ENCODE measurements at regions of chr1 and their contacts with region 1.

Region 1: DNA sequence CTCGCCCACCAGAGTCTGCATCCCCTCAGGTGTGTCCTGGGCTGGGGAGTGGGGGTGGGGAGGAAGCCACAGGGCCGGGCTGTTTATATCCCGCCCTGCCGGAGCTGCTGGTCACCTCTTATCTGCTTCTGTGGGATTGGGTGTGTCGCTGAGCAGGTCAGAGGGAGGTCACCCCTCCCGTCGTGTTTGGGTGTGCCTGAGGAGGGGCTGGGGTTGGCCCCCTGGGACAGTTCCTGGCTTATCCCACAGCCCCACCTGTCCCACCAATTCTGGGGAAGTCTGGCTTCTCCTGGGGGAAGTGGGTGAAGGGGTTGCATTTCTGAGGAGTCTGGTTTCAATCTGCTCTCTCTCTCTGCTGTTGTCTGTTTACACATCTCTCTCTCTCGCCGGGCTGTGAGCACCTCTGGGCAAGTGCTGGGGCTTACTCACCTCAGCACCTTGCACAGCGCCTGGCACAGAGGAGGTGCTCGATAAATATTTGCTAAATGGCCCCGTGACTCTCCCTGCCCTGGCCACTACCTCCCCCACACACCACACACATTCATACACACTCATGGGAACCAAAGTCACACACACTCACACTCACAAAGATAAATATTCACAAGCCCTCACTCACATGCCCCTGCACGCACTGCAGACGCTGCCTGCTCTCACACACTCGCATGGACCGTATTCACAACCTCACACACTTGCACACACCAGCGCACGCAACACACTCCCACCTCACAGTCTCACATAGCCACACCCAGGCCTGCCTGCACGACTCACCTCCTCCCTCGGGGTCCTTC is 8.3 kb downstream of the ELF3 start:
- DNase-seq: peak; percentile 95
- H3K4me3 Mint-ChIP-seq: peak overlapping the region; percentile 92
- H3K27ac Mint-ChIP-seq: peak overlapping the region; percentile 89
- H3K4me1 Mint-ChIP-seq: peaks cover 78% of the 10 kb centered on the region
- H3K27me3 Mint-ChIP-seq: no peaks in the 10 kb centered on the region
- CTCF ChIP-seq: no peak

Region 2: DNA sequence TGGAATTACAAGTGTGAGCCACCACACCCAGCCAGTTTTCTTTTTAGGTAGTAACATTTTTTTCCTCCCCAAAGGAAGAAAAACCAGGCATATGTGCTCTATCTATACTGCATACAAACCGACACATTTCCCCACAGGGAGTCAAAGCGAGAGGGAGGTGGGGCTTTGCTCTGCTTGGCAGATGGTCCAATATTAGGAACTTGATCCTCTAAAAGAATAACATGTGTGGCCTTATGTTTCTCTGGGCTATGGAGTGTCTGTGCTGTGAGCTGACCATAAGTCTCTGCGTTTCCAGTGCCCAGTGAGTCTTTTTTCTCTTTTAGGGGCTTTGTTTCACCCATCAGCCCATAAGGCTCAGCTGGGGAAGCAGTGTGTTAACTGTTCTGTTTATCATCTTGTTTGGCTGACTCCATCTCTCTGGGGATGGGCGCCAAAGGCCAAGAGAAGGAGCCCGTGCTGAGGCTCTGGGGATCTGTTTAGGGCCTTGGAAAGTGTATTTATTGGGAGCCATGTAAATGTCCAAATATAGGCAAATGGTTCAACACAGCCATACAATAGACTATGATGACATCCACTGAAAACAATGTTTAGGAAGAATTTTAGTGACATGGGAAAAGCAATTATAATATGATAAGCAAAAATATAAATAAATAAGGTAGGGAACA is 92.5 kb before region 1 on chr1:
- CTCF ChIA-PET with region 1: no interaction called
- intact Hi-C with region 1: no loop called
- DNase-seq: no peak
- H3K4me3 Mint-ChIP-seq: no peak overlapping the region
- H3K27ac Mint-ChIP-seq: no peak overlapping the region
- H3K4me1 Mint-ChIP-seq: peaks cover 9% of the 10 kb centered on the region
- H3K27me3 Mint-ChIP-seq: no peaks in the 10 kb centered on the region
- CTCF ChIP-seq: no peak

Region 3: DNA sequence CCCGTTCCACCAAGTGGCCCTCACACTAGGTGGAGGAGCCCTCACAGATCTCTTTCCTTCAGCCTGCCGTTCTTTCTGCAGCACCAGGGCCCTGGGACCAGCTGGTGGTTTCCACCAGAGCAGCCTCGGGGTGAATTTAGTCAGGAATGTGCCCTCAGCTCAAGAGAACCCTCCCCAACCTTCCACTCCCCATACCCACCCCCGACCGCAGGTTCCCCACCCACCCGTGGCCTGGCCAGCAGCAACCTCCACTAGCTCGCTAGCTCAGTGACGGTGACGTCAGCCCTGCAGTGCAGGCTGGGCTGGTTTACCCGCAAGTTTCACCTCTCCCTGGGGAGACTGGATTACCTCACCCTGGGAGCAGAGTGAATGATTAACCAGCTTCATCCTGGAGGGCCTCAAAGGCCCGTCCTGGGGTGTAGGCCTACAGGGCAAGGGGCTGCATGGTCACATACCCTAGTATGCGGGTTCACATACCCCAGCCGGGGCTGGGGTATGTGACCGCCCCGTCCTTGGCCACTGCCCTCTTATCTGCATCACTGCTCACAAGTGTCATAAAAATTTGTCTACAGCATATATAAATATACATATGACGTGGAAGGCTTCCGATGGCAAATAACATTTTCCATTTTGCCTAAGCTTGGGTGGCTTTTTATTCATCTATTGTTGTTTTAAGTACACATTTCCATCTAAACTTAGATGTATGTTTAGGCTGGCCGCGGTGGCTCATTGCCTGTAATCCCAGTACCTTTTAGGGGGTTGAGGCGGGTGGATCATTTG is 16.2 kb after region 1 on chr1:
- CTCF ChIA-PET with region 1: interaction called, 14 read pairs
- intact Hi-C with region 1: no loop called
- DNase-seq: peak; percentile 99
- H3K4me3 Mint-ChIP-seq: peak overlapping the region; percentile 46
- H3K27ac Mint-ChIP-seq: peak overlapping the region; percentile 97
- H3K4me1 Mint-ChIP-seq: peaks cover 75% of the 10 kb centered on the region
- H3K27me3 Mint-ChIP-seq: no peaks in the 10 kb centered on the region
- CTCF ChIP-seq: no peak

Region 4: DNA sequence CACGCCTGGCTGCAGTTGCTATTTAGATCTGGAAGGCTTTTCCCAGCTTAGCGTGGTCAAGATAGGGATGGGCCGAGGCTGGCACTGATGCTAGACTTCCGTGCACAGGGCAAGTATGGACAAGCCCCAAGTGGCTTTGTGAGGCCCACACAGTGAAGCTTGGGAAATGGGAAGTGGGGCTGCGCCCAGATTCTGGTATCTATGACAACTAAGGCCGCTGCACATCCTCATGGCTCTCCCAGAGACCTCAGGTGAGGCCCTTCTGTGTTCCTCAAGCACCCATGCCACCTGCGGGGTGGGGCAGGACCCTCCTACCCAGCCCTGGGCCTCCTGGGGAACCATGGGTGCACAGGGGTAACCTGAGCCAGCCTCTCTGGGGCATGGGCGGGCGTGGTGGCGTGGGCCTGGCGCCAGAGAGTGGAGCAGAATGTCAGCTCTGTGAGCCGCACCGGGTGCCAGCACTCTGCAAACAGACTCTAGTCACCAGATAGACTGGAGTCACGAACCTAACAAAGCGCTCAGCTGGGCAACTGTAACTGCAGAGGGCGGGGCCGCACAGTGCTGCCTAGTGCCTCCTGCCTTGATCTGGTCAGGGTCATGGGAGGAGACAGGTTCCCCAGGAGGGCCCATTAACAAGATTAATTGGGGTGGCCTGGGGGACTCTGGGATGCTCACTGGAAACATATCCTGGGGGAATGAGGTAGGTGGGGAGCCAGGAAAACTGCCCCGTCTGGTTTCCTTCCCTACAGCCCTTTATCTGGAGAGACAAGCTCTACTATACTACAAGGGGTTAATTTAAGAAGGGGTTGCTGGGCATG is 38.2 kb after region 1 on chr1:
- CTCF ChIA-PET with region 1: interaction called, 8 read pairs
- intact Hi-C with region 1: loop called (anchors 2 kb)
- DNase-seq: peak; percentile 96
- H3K4me3 Mint-ChIP-seq: peak overlapping the region; percentile 4
- H3K27ac Mint-ChIP-seq: peak overlapping the region; percentile 66
- H3K4me1 Mint-ChIP-seq: peaks cover 55% of the 10 kb centered on the region
- H3K27me3 Mint-ChIP-seq: no peaks in the 10 kb centered on the region
- CTCF ChIP-seq: no peak

Region 5: DNA sequence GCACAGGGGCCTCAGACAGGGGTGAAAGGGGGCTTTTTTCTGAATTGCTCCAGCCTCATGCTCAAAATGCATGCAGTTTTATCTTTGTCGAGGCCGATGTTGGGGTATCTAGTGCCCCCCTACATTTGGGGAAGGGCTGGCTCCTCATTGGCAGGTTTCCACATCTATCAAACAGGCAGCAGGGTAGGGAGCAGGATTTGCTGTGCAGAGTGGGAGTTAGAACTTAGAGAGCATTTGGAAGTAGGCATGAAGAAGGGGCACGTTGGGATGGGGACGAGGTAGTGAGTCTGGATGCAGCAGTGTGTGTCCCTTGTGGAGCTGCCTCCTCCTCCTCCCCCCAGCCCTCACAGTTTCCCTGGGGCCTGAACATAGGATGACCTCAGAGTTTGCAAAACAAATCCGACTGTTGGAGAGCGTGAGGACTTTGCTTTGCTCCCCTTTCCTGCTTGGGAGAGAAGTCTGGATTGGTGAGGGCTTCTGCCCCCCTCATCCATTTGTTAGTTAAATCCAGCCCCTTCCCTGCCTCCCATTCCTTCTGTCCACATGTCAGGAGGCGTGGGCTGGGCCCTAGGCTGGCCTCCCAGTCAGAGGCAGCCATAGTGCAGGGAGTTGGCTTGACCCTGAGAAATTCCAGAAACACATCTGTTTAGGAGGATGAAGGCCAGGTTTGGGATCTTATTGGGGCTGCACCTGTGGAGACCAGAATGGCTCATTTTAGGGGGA is 67.2 kb after region 1 on chr1:
- CTCF ChIA-PET with region 1: interaction called, 10 read pairs
- intact Hi-C with region 1: loop called (anchors 1 kb)
- DNase-seq: peak; percentile 73
- H3K4me3 Mint-ChIP-seq: peak overlapping the region; percentile 67
- H3K27ac Mint-ChIP-seq: peak overlapping the region; percentile 99
- H3K4me1 Mint-ChIP-seq: peaks cover 61% of the 10 kb centered on the region
- H3K27me3 Mint-ChIP-seq: no peaks in the 10 kb centered on the region
- CTCF ChIP-seq: no peak